GM10248 (cell line): ENCODE measurements at regions of chr20 and their contacts with region 1.

Region 1: GRCh38 chr20:21505161-21505809 is 8.6 kb downstream of the NKX2-2 start:
- DNase-seq: peak; percentile 83
- CTCF ChIP-seq: peak; percentile 98

Region 2: GRCh38 chr20:20837574-20838021 is 667.7 kb before region 1 on chr20:
- CTCF ChIA-PET with region 1: interaction called, 28 read pairs
- POLR2A ChIA-PET with region 1: no interaction called
- DNase-seq: peak; percentile 58
- CTCF ChIP-seq: peak; percentile 64

Region 3: DNA sequence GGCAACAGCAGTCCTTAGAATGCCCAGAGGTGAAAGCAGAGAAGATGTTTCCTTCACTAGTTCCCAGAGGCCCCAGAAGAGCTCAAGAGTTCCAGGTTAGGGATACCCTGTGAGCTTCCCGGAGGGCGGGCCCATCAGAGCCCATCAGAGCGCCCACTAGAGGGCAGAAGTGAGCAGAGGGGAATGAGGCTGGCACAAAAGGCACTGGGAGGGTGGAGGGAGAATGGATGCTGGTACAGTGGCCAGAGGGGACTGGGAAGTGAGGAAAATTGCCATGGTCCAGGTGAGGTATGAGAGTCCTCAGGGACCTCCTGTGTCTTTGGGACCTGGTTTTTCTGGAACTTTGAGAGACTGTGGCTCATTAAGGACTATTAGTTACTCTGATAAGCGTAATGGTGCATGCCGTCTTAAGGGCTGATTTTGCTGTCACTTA is 456.4 kb before region 1 on chr20:
- CTCF ChIA-PET with region 1: interaction called, 26 read pairs
- POLR2A ChIA-PET with region 1: no interaction called
- DNase-seq: peak; percentile 71
- CTCF ChIP-seq: peak; percentile 77

Region 4: DNA sequence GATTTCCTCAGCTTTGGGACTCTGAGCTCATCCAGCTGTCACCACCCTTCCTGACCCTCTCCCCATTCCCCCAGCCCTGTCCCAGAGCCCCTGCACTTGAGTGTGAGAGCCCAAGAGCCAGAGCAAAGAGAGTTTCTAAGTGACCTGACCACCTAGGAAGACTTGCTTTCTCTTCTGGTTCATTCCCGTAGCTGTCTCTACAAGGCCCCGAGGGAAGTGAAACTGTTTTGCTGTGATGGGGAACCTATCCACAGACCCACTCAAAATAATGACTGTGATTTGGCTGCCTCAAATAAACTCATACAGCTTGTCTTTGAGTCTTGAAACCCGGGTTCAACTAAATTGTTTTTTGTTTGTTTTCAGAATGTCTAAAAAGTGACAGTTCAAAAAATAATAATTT is 276.8 kb before region 1 on chr20:
- CTCF ChIA-PET with region 1: interaction called, 21 read pairs
- POLR2A ChIA-PET with region 1: no interaction called
- DNase-seq: peak; percentile 61
- CTCF ChIP-seq: no peak

Region 5: DNA sequence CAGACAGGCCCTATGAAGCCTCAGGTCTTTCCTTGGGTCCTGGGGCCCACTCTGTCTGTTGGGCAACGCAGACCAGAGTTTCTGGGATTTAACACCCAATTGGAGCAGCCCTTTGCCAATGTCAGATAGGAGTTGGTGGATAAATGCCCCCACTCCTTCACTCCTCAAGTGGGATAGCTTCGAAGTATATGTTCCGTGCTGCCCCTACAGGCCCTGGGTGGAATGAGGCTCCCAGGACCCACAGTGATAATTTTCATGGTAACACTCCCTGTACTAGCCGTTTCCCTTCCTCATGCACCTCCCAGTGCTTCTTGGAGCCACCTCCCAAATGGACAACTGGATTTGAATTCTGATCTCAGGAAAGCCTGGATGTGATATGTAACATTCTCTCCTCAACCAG is 933.6 kb after region 1 on chr20:
- CTCF ChIA-PET with region 1: no interaction called
- POLR2A ChIA-PET with region 1: no interaction called
- DNase-seq: no peak
- CTCF ChIP-seq: no peak